ENCODE measurements at regions of chr16 and their contacts with region 1.

Region 1: GRCh38 chr16:27367461-27368357 is 34.3 kb upstream of the IL21R start:
- DNase-seq: peak; percentile 81
- H3K4me3 Mint-ChIP-seq: peak overlapping the region; percentile 53
- H3K27ac Mint-ChIP-seq: peak overlapping the region; percentile 99
- H3K4me1 Mint-ChIP-seq: peaks cover 65% of the 10 kb centered on the region
- H3K27me3 Mint-ChIP-seq: no peaks in the 10 kb centered on the region

Region 2: DNA sequence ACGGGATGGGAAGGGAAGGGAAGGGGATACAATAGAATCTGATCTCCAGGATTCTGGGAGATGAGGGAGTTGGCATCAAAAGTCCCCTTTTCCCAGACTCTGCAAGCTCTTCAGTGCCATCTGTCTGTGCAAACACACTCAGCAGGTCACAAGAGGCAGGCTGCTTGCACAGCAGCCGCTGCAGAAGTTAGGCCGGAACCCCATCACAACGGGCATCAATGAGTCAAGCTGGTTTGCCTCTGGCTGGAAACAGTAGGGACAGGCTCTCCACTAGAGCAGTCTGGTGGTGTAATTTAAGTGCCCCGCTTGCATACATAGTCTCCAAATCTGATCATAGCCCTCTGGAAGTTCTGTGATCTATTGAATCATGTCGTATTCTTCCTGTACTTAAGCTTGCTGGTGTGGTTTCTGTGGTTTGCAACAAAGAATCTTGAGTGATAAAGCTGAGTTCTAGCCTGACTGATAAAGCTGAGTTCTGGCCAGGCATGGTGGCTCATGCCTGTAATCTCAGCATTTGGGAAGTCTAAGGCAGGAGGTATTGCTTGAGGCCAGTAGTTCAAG is 198.1 kb before region 1 on chr16:
- intact Hi-C with region 1: loop called (anchors 1 kb)
- DNase-seq: peak; percentile 67
- H3K4me3 Mint-ChIP-seq: peak overlapping the region; percentile 39
- H3K27ac Mint-ChIP-seq: peak overlapping the region; percentile 82
- H3K4me1 Mint-ChIP-seq: peaks cover 46% of the 10 kb centered on the region
- H3K27me3 Mint-ChIP-seq: no peaks in the 10 kb centered on the region

Region 3: GRCh38 chr16:27335349-27336053 is 32.2 kb before region 1 on chr16:
- intact Hi-C with region 1: no loop called
- DNase-seq: no peak
- H3K4me3 Mint-ChIP-seq: no peak overlapping the region
- H3K27ac Mint-ChIP-seq: peak overlapping the region; percentile 52
- H3K4me1 Mint-ChIP-seq: peaks cover 57% of the 10 kb centered on the region
- H3K27me3 Mint-ChIP-seq: no peaks in the 10 kb centered on the region

Region 4: GRCh38 chr16:27355610-27356009 is 12.1 kb before region 1 on chr16:
- intact Hi-C with region 1: no loop called
- DNase-seq: no peak
- H3K4me3 Mint-ChIP-seq: no peak overlapping the region
- H3K27ac Mint-ChIP-seq: peak overlapping the region; percentile 72
- H3K4me1 Mint-ChIP-seq: peaks cover 22% of the 10 kb centered on the region
- H3K27me3 Mint-ChIP-seq: no peaks in the 10 kb centered on the region

Region 5: GRCh38 chr16:27401768-27402568 is 34.3 kb after region 1 on chr16 and contains the start of gene IL21R:
- intact Hi-C with region 1: loop called (anchors 1 kb)
- DNase-seq: peak; percentile 78
- H3K4me3 Mint-ChIP-seq: peak within 1 kb of the TSS; percentile 99
- H3K27ac Mint-ChIP-seq: peak within 1 kb of the TSS; percentile 99
- H3K4me1 Mint-ChIP-seq: peaks cover 45% of the 10 kb centered on the region
- H3K27me3 Mint-ChIP-seq: no peaks in the 10 kb centered on the region
- total RNA-seq, gene IL21R: 84.2 and 84.5 TPM in 2 replicates

Region 6: GRCh38 chr16:27426423-27427408 is 59.0 kb after region 1 on chr16:
- intact Hi-C with region 1: loop called (anchors 2 kb)
- DNase-seq: peak; percentile 66
- H3K4me3 Mint-ChIP-seq: peak overlapping the region; percentile 37
- H3K27ac Mint-ChIP-seq: peak overlapping the region; percentile 76
- H3K4me1 Mint-ChIP-seq: peaks cover 50% of the 10 kb centered on the region
- H3K27me3 Mint-ChIP-seq: no peaks in the 10 kb centered on the region

Measured in activated T-helper 2 cell treated with anti-CD3 and anti-CD28 coated beads, Interferon-gamma antibody, Interleukin-2, Interleukin-4, amounts not matched to agents 10 μg/mL and 5 μg/mL and 100 μg/mL, durations not matched to agents 14 hours and 24 hours and 36 hours (primary cell).